Endothelial cell of umbilical vein (primary cell): ENCODE measurements at regions of chr10 and their contacts with region 1.

Region 1: GRCh38 chr10:100286051-100287033 is at the start of gene BLOC1S2:
- DNase-seq: peak; percentile 90
- H3K4me3 ChIP-seq: peak within 1 kb of the TSS; percentile 8 to 84 (median 75)
- H3K27ac ChIP-seq: peak within 1 kb of the TSS; percentile 44
- H3K4me1 ChIP-seq: peaks cover 14% of the 10 kb centered on the region
- H3K27me3 ChIP-seq: peaks cover 3 to 7% of the 10 kb centered on the region in 2 experiments
- CTCF ChIP-seq: peak in 1 of 2 donors; percentile 8
- POLR2A ChIP-seq: peak; percentile 90
- total RNA-seq, gene BLOC1S2: 45.9 and 54.0 TPM in 2 replicates

Region 2: GRCh38 chr10:99834410-99834809 is 451.9 kb before region 1 on chr10:
- CTCF ChIA-PET with region 1: no interaction called
- POLR2A ChIA-PET with region 1: no interaction called
- dilution Hi-C with region 1: no loop called
- intact Hi-C with region 1: no loop called
- DNase-seq: no peak
- H3K4me3 ChIP-seq: no peak overlapping the region
- H3K27ac ChIP-seq: no peak overlapping the region
- H3K4me1 ChIP-seq: no peaks in the 10 kb centered on the region
- H3K27me3 ChIP-seq: no peaks in the 10 kb centered on the region
- CTCF ChIP-seq: no peak
- POLR2A ChIP-seq: no peak

Region 3: GRCh38 chr10:100267237-100268104 is 18.9 kb before region 1 on chr10 and contains the start of gene CWF19L1:
- CTCF ChIA-PET with region 1: no interaction called
- POLR2A ChIA-PET with region 1: interaction called, 5 read pairs
- dilution Hi-C with region 1: no loop called
- intact Hi-C with region 1: loop called (anchors 2 kb)
- DNase-seq: peak; percentile 89
- H3K4me3 ChIP-seq: peak within 1 kb of the TSS; percentile 51 to 95 (median 87)
- H3K27ac ChIP-seq: peak within 1 kb of the TSS; percentile 71
- H3K4me1 ChIP-seq: no peaks in the 10 kb centered on the region
- H3K27me3 ChIP-seq: no peaks in the 10 kb centered on the region
- CTCF ChIP-seq: no peak
- POLR2A ChIP-seq: no peak
- total RNA-seq, gene CWF19L1: 29.9 and 30.3 TPM in 2 replicates

Region 4: GRCh38 chr10:100912605-100913469 is 626.5 kb after region 1 on chr10 and contains the start of gene SLF2:
- CTCF ChIA-PET with region 1: no interaction called
- POLR2A ChIA-PET with region 1: no interaction called
- dilution Hi-C with region 1: no loop called
- intact Hi-C with region 1: loop called (anchors 5 kb)
- DNase-seq: peak; percentile 99
- H3K4me3 ChIP-seq: peak within 1 kb of the TSS; percentile 52 to 99 (median 88)
- H3K27ac ChIP-seq: peak within 1 kb of the TSS; percentile 76
- H3K4me1 ChIP-seq: peaks cover 35% of the 10 kb centered on the region
- H3K27me3 ChIP-seq: no peaks in the 10 kb centered on the region
- CTCF ChIP-seq: no peak
- POLR2A ChIP-seq: peak; percentile 53
- total RNA-seq, gene SLF2: 28.0 and 35.5 TPM in 2 replicates